Aorta (tissue), 5 donors: ENCODE measurements at regions of chr9 and their contacts with region 1.

Region 1: DNA sequence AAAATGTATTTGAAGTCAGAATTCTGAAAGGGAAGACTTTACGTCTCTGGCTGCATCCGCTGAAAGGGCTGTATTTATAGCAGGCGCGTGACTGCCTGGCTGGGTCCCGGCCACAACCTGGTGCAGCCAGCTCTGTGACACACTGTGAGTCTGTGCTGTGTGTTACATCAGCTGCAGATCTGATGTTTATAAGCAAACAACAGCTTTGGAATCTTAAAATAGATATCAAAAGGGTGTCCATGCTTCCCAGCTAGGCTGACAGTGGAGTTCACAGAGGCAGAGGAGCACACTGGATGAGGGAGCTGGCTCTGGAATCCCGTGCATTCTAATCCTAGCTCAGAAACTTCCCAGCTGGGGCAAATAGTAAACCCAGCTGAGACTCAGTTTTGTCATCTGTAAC is 433.4 kb upstream of the BRINP1 start:
- DNase-seq: peak; percentile 74 to 83
- ATAC-seq: peak; percentile 82
- H3K4me3 ChIP-seq: no peak overlapping the region
- H3K27ac ChIP-seq: peak overlapping the region in 1 of 2 donors; percentile 30
- H3K4me1 ChIP-seq: no peaks in the 10 kb centered on the region
- H3K27me3 ChIP-seq: no peaks in the 10 kb centered on the region

Region 2: GRCh38 chr9:119951090-119951489 is 148.5 kb after region 1 on chr9:
- intact Hi-C with region 1: loop called (anchors 5 to 10 kb)
- DNase-seq: peak in 1 of 2 donors; percentile 44
- ATAC-seq: peak; percentile 51
- H3K4me3 ChIP-seq: no peak overlapping the region
- H3K27ac ChIP-seq: peak overlapping the region in 1 of 2 donors; percentile 20
- H3K4me1 ChIP-seq: peaks cover 5 to 6% of the 10 kb centered on the region in 2 donors
- H3K27me3 ChIP-seq: no peaks in the 10 kb centered on the region

Region 3: DNA sequence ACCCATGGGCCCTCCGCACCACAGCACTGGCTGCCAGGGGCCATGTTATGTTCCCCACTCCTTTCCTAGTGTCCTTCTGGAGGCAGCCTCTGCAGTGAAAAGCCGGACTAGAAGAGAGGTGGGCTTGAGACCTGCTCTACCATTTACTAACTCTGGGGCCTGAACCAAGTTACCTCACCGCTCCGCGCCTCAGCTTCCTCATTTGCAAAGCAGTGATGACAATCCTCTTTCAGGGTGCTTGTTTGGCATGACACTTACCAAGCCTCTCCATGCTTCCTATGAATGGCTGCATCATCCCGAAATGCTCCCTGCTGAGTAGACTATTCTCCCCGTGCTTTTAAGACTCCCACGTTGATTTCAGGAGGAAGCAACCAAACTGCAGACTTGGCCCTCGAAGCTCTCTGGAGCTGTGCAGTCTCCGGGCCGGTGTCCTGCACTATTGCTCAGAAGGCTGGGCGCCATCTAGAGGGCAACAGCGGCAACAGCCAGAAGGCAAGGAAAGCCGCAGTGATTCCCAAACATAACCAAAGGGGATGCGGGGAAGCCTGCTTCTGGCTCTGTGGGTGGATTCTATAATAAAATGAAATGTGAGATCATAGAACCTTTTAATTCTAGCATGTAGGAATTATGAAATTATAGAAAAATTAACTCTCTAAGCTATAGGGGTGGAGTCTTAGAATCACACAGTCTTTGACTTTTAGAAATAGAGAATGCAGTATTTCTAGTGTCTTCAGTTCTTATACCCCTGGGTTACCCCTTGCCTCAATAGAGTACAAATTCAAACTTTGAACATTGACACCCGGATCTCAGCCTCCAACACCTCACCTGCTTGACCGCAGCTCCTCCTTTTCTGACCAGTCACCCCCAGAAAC is 166.5 kb after region 1 on chr9:
- intact Hi-C with region 1: loop called in 1 of 2 experiments (anchors 5 kb)
- DNase-seq: peak; percentile 87 to 91
- ATAC-seq: peak; percentile 89
- H3K4me3 ChIP-seq: no peak overlapping the region
- H3K27ac ChIP-seq: no peak overlapping the region
- H3K4me1 ChIP-seq: peaks cover 0 to under 1% of the 10 kb centered on the region in 2 donors
- H3K27me3 ChIP-seq: no peaks in the 10 kb centered on the region